ENCODE measurements at regions of chr12 and their contacts with region 1.

Region 1: GRCh38 chr12:63826006-63826585 is 18.4 kb upstream of the SRGAP1 start:
- DNase-seq: peak in 1 of 4 donors; percentile 88
- ATAC-seq: peak; percentile 82
- H3K4me3 ChIP-seq: no peak overlapping the region
- H3K27ac ChIP-seq: no peak overlapping the region
- H3K4me1 ChIP-seq: no peaks in the 10 kb centered on the region
- H3K27me3 ChIP-seq: peaks cover 0 to 11% of the 10 kb centered on the region in 2 donors
- CTCF ChIP-seq: peak; percentile 77 to 78

Region 2: DNA sequence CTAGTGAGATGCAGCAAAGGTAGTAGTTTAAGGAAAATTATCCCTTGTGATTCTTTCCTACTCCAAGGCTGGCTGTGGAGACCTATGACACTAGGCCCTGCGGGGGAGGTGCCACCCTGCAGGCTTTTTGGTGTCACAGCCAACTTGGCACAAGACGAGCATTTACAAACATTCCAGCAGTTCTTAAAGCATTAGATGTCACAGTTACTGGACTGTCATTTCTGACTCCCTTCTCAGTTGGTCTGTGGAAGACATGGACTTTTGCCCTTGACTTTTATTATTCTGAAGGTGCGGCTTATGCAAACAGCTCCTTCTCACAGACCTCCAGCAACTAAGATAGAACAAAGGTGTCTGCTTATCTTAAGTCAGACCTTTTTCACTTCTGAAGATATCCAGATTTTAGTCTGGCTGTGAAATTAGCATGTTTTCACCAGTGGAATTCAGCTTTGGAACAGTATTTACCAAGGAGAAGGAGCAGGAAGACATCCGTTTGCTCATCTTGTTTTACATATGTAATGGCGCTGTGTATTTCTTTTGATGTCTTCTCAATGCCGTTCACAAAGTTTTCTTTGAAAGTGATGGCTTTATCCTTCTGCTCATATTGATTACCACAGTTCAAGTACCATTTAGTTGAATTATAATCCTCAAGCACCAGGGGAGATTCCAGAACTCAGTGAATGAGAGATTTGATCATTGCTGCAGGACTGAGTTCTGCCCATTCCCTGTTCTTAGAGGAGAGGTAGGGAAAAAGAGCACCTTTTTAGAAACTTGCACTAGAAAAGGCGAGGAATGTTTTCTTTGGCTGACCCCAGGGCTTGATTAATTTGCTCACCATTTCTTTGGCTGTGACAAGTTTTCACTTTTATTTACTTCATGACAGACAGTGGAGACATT is 36.4 kb after region 1 on chr12:
- intact Hi-C with region 1: no loop called
- DNase-seq: no peak
- ATAC-seq: peak; percentile 74
- H3K4me3 ChIP-seq: no peak overlapping the region
- H3K27ac ChIP-seq: no peak overlapping the region
- H3K4me1 ChIP-seq: no peaks in the 10 kb centered on the region
- H3K27me3 ChIP-seq: no peaks in the 10 kb centered on the region
- CTCF ChIP-seq: no peak

Region 3: DNA sequence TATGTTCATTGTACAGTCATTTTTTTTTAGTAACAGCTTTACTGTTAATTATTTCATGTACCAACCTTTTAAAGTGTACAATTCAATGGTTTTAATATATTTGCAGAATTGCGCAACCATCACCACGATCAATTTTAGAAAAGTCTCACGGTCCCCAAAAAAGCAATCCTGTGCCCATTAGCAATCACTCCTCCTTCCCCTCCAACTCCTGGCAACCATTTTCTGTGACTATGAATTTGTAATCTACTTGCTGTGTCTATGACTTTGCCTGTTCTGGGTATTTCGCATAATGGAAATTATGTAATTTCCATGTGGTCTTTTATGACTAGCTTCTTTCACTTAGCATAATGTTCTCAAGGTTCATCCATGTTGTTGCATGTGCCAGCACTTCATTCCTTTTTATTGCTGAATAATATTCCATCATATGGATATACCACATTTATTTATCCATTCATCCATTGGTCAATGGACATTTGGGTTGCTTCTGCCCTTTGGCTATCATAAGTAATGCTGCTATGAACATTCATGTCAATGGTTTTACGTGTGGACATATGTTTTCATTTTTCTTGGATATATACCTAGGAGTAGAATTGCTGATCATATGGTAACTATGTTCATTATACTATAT is 386.1 kb after region 1 on chr12:
- intact Hi-C with region 1: no loop called
- DNase-seq: no peak
- ATAC-seq: no peak
- H3K4me3 ChIP-seq: no peak overlapping the region
- H3K27ac ChIP-seq: no peak overlapping the region
- H3K4me1 ChIP-seq: no peaks in the 10 kb centered on the region
- H3K27me3 ChIP-seq: no peaks in the 10 kb centered on the region
- CTCF ChIP-seq: no peak

Region 4: DNA sequence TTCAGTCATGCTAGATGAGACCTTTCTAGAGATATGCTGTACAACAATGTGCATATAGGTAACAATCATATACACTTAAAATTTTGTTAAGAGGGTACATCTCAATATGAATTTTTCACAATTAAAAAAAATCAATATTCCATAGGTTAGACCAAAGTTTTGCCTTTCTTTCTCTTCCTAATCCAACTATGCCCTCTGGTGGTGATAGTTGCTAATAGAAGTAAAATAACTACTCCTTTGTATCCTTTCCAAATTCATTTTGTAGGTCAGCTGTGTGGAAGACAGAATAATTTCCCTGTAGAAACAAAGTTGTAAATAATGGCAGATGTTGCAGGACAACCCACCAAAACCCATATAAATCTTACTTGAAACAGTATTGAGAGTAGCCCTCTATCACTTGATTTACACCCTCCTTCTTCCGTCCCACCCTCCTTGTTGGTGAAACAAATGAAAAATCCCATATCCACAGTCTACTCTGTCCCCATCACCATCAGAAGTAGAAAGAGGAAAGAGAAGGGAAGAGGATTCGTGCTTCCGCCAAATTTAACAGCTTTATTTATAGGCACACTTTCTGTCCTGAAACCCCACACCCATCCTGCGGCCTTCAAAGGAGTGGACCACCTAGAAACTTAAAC is 430.2 kb after region 1 on chr12:
- intact Hi-C with region 1: loop called (anchors 5 to 10 kb)
- DNase-seq: peak in 2 of 4 donors; percentile 67 to 79
- ATAC-seq: peak; percentile 82
- H3K4me3 ChIP-seq: no peak overlapping the region
- H3K27ac ChIP-seq: no peak overlapping the region
- H3K4me1 ChIP-seq: peaks cover 0 to 5% of the 10 kb centered on the region in 2 donors
- H3K27me3 ChIP-seq: no peaks in the 10 kb centered on the region
- CTCF ChIP-seq: peak; percentile 54 to 58

Region 5: GRCh38 chr12:64269171-64269570 is 443.1 kb after region 1 on chr12:
- intact Hi-C with region 1: loop called in 1 of 2 experiments (anchors 10 kb)
- DNase-seq: no peak
- ATAC-seq: no peak
- H3K4me3 ChIP-seq: no peak overlapping the region
- H3K27ac ChIP-seq: no peak overlapping the region
- H3K4me1 ChIP-seq: no peaks in the 10 kb centered on the region
- H3K27me3 ChIP-seq: no peaks in the 10 kb centered on the region
- CTCF ChIP-seq: no peak

Measured in left lung (tissue), 14 donors.